Mammary epithelial cell (primary cell): ENCODE measurements at regions of chr6 and their contacts with region 1.

Region 1: GRCh38 chr6:124870611-124871459 is 91.4 kb upstream of the RNF217 start:
- DNase-seq: peak; percentile 12
- H3K4me3 ChIP-seq: no peak overlapping the region
- H3K27ac ChIP-seq: no peak overlapping the region
- H3K4me1 ChIP-seq: peaks cover 5% of the 10 kb centered on the region
- H3K27me3 ChIP-seq: no peaks in the 10 kb centered on the region
- CTCF ChIP-seq: peak; percentile 54 to 63

Region 2: DNA sequence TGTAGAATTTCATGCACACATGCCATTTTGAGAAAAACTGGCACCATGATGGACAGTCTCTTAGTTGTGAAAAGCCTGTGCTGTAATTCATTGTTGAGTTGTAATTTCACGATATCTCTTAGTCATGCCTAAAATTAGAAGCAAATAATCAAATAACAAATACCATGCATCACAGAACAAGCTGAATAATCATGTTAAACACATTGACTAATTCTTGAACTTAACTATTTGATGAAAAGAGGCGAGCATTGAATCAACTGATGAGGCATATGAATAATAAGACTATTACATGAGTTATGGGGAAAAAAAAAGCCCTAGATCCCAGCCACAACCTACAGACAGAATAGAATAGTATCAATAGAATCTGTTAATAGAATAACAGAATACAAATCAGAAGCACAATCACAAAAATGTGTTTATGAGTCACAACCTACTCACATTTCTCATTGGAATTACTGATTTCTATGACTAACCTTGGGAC is 77.2 kb after region 1 on chr6:
- CTCF ChIA-PET with region 1: no interaction called
- dilution Hi-C with region 1: no loop called
- in situ Hi-C with region 1: no loop called
- intact Hi-C with region 1: no loop called
- DNase-seq: peak; percentile 74
- H3K4me3 ChIP-seq: no peak overlapping the region
- H3K27ac ChIP-seq: peak overlapping the region; percentile 20
- H3K4me1 ChIP-seq: peaks cover 12% of the 10 kb centered on the region
- H3K27me3 ChIP-seq: no peaks in the 10 kb centered on the region
- CTCF ChIP-seq: no peak

Region 3: GRCh38 chr6:125107896-125108295 is 237.1 kb after region 1 on chr6:
- CTCF ChIA-PET with region 1: no interaction called
- dilution Hi-C with region 1: no loop called
- in situ Hi-C with region 1: loop called (anchors 5 kb)
- intact Hi-C with region 1: no loop called
- DNase-seq: no peak
- H3K4me3 ChIP-seq: no peak overlapping the region
- H3K27ac ChIP-seq: no peak overlapping the region
- H3K4me1 ChIP-seq: peaks cover 22% of the 10 kb centered on the region
- H3K27me3 ChIP-seq: no peaks in the 10 kb centered on the region
- CTCF ChIP-seq: no peak

Region 4: GRCh38 chr6:125114248-125114858 is 243.5 kb after region 1 on chr6:
- CTCF ChIA-PET with region 1: interaction called, 5 read pairs
- dilution Hi-C with region 1: no loop called
- in situ Hi-C with region 1: loop called (anchors 5 kb)
- intact Hi-C with region 1: loop called (anchors 1 kb)
- DNase-seq: peak; percentile 35
- H3K4me3 ChIP-seq: no peak overlapping the region
- H3K27ac ChIP-seq: no peak overlapping the region
- H3K4me1 ChIP-seq: peaks cover 11% of the 10 kb centered on the region
- H3K27me3 ChIP-seq: no peaks in the 10 kb centered on the region
- CTCF ChIP-seq: peak; percentile 80 to 94

Region 5: DNA sequence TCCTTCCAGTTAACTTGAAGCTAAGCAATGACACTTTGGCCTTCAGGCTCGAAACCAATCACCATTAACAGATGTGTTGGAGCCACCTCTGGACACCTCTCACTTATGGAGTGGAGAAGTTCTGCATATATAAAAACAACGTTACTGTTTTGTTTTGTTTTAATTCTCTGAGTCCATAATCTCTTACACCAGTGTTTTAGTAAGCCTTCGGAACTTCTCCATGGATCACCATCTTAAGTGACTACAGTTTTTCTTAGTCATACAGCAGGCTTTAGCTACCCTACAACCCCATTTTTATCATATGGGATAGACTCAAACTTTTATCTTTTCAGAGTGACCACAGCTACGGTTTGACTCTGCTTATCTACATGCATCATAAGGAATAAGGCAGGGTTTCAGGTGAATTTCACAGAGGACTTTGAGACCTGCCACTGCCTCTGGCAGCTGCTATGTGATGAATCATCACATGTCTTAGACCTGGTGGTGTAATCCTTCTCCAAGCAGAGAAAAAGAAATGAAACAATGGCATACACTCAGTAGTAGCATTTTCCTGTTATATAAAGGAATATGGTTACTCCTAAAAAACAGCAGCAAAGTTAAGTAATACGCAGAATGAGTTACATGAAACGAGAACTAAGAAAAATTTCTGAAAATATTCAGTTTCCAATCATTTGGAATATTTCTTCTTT is 436.5 kb after region 1 on chr6:
- CTCF ChIA-PET with region 1: no interaction called
- dilution Hi-C with region 1: no loop called
- in situ Hi-C with region 1: no loop called
- intact Hi-C with region 1: loop called (anchors 1 kb)
- DNase-seq: peak; percentile 69
- H3K4me3 ChIP-seq: no peak overlapping the region
- H3K27ac ChIP-seq: no peak overlapping the region
- H3K4me1 ChIP-seq: peaks cover 8% of the 10 kb centered on the region
- H3K27me3 ChIP-seq: no peaks in the 10 kb centered on the region
- CTCF ChIP-seq: no peak

Region 6: DNA sequence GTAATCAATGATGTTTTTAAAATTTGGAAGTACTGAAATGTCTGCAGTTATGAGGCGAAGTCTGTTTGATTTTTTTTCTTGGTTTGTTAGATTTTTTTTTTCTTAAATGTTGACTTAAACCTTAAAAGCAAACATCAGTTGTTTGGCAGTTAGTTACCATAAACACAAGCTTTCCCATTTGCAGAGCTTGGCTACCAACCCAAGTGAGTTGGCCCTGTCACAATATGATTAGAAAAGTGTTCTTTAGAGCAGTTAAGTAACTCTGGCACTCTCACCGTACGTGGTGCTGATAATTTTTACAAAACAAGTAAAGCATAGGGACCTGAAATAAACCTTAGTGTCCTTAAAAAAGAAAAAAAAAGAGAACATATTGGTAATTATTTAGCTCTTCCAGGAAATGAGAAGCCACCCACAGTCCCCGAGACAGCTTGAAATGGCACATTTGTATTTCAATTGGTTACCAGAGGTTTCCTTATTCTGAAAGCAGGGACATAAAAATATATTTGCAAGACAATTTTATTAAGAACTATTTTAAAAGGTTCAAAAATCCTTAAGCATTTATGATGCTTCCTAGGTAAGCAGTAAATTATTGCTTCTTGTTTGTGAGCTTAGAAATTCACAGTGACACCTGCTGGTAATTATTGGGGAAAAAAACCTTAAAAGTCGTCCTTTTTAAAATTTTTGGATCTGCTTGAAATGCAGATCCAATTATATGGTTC is 882.5 kb after region 1 on chr6:
- CTCF ChIA-PET with region 1: no interaction called
- dilution Hi-C with region 1: no loop called
- in situ Hi-C with region 1: loop called (anchors 25 kb)
- intact Hi-C with region 1: no loop called
- DNase-seq: no peak
- H3K4me3 ChIP-seq: no peak overlapping the region
- H3K27ac ChIP-seq: no peak overlapping the region
- H3K4me1 ChIP-seq: peaks cover 14% of the 10 kb centered on the region
- H3K27me3 ChIP-seq: peaks cover 21% of the 10 kb centered on the region
- CTCF ChIP-seq: peak; percentile 23 to 49

Region 7: GRCh38 chr6:125764121-125764671 is 893.4 kb after region 1 on chr6:
- CTCF ChIA-PET with region 1: no interaction called
- dilution Hi-C with region 1: no loop called
- in situ Hi-C with region 1: loop called (anchors 25 kb)
- intact Hi-C with region 1: loop called (anchors 5 kb)
- DNase-seq: no peak
- H3K4me3 ChIP-seq: no peak overlapping the region
- H3K27ac ChIP-seq: no peak overlapping the region
- H3K4me1 ChIP-seq: no peaks in the 10 kb centered on the region
- H3K27me3 ChIP-seq: peaks cover 2% of the 10 kb centered on the region
- CTCF ChIP-seq: no peak